Activated CD8-positive, alpha-beta T cell treated with anti-CD3 and anti-CD28 coated beads, Interleukin-2, amount 10 ng/mL, durations not matched to agents 7 days and 5 days (primary cell): ENCODE measurements at regions of chr6 and their contacts with region 1.

Region 1: DNA sequence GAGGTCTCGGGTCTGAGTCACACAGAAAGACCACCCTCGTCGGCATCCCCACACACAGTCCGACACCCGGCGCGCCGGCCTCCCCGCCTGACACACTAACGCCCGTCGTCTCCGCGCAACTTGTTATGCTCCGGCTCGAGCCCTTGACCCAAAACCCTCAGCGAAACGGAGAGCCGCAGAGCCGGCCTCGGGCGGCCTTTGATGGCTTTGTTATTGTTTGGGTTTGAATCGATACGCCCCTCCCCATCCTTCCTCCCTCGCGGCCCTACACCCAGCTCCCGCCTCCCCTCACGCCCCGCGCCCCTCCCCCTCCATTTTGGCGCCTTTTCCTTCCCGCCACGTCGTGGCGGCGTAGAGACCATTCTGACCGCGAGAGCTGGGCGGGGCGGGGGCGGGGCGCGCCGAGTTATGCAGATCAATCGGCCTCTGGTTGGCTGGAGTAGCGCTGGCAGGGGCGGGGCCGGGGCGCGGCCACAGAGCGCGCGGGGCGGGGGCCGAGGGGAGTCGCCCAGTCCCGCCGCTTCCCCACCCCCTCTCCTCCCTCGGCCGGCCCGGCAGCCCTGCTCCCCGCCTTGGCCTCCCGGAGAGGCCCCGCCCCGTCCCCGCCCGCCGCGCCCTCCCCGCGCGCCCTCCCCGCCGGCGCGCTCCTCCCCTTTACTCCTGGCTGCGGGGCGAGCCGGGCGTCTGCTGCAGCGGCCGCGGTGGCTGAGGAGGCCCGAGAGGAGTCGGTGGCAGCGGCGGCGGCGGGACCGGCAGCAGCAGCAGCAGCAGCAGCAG is at the start of gene PIM1:
- DNase-seq: peak; percentile 100
- ATAC-seq: peak; percentile 82
- H3K4me3 Mint-ChIP-seq: peak within 1 kb of the TSS; percentile 100
- H3K27ac Mint-ChIP-seq: peak within 1 kb of the TSS; percentile 99
- H3K4me1 Mint-ChIP-seq: peaks cover 31% of the 10 kb centered on the region
- H3K27me3 Mint-ChIP-seq: peaks cover 4% of the 10 kb centered on the region
- total RNA-seq, gene PIM1: 432 to 449 TPM

Region 2: GRCh38 chr6:37029249-37029971 is 140.3 kb before region 1 on chr6:
- CTCF ChIA-PET with region 1: interaction called, 584 read pairs
- POLR2A ChIA-PET with region 1: interaction called, 330 read pairs
- DNase-seq: peak; percentile 64
- ATAC-seq: peak; percentile 62
- H3K4me3 Mint-ChIP-seq: no peak overlapping the region
- H3K27ac Mint-ChIP-seq: peak overlapping the region; percentile 75
- H3K4me1 Mint-ChIP-seq: peaks cover 84% of the 10 kb centered on the region
- H3K27me3 Mint-ChIP-seq: no peaks in the 10 kb centered on the region

Region 3: GRCh38 chr6:37122861-37123260 is 46.8 kb before region 1 on chr6:
- CTCF ChIA-PET with region 1: no interaction called
- POLR2A ChIA-PET with region 1: no interaction called
- DNase-seq: no peak
- ATAC-seq: no peak
- H3K4me3 Mint-ChIP-seq: no peak overlapping the region
- H3K27ac Mint-ChIP-seq: no peak overlapping the region
- H3K4me1 Mint-ChIP-seq: peaks cover 4% of the 10 kb centered on the region
- H3K27me3 Mint-ChIP-seq: peaks cover 10% of the 10 kb centered on the region

Region 4: DNA sequence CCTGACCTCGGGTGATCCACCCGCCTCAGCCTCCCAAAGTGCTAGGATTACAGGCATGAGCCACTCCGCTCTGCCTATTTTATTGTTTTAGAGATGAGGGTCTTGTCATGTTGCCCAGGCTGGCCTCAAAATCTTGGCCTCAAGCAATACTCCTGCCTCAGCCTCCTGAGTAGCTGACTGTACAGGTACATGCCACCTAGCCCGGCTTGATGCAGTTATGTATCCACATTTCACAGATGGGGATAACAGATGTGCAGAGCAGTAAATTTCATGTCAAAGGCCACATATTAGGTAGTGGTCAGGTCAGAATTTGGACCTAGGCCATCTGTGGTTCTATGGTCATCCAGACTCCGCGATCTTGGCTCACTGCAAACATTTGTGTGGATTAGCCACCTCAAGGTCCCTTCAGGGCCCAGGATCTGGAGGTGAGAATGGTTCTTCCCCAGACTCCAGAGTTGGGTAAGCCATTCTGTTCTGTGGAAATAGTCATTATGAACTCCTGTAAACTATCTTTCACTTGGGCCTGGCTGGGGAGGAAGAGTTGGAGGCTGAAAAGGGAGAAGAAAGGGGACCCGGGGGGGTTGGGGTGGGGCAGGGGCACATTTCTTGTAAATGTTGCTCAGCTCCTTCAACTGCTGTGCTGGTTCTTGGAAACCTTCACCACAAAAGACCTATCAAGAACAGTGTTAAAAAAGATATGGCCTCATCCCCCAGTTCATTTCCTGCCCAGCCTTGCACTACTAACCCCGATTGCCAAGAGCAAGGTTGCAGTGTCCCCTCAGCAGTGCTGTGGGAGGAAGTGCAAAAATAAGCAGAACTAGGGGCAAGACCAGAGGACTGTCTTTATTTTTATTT is 13.3 kb after region 1 on chr6:
- CTCF ChIA-PET with region 1: interaction called, 45 read pairs
- POLR2A ChIA-PET with region 1: interaction called, 128 read pairs
- DNase-seq: peak; percentile 89
- ATAC-seq: peak; percentile 95
- H3K4me3 Mint-ChIP-seq: peak overlapping the region; percentile 36
- H3K27ac Mint-ChIP-seq: peak overlapping the region; percentile 96
- H3K4me1 Mint-ChIP-seq: peaks cover 73% of the 10 kb centered on the region
- H3K27me3 Mint-ChIP-seq: no peaks in the 10 kb centered on the region

Region 5: DNA sequence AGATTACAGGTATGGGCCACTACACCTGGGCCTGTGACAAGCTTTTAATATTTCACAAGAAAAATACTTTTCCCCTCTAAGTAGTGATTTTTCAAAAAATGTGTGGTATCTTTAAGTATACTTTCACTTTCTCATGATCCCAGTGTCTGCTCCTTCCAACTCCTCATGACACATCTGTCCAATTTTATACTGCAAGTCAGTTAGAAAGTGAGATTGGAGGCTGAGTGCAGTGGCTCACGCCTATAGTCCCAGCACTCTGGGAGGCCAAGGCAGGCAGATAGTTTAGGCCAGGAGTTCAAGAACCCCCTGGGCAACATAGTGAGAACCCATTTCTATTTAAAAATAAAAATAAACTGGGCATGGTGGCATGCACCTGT is 20.5 kb after region 1 on chr6:
- CTCF ChIA-PET with region 1: interaction called, 45 read pairs
- POLR2A ChIA-PET with region 1: interaction called, 128 read pairs
- DNase-seq: no peak
- ATAC-seq: peak; percentile 45
- H3K4me3 Mint-ChIP-seq: peak overlapping the region; percentile 12
- H3K27ac Mint-ChIP-seq: peak overlapping the region; percentile 85
- H3K4me1 Mint-ChIP-seq: peaks cover 76% of the 10 kb centered on the region
- H3K27me3 Mint-ChIP-seq: no peaks in the 10 kb centered on the region

Region 6: GRCh38 chr6:37200085-37200484 is 30.4 kb after region 1 on chr6:
- CTCF ChIA-PET with region 1: interaction called, 210 read pairs
- POLR2A ChIA-PET with region 1: interaction called, 351 read pairs
- DNase-seq: no peak
- ATAC-seq: no peak
- H3K4me3 Mint-ChIP-seq: no peak overlapping the region
- H3K27ac Mint-ChIP-seq: peak overlapping the region; percentile 3
- H3K4me1 Mint-ChIP-seq: peaks cover 46% of the 10 kb centered on the region
- H3K27me3 Mint-ChIP-seq: no peaks in the 10 kb centered on the region

Region 7: GRCh38 chr6:37657112-37657886 is 487.6 kb after region 1 on chr6:
- CTCF ChIA-PET with region 1: no interaction called
- POLR2A ChIA-PET with region 1: no interaction called
- DNase-seq: no peak
- ATAC-seq: no peak
- H3K4me3 Mint-ChIP-seq: no peak overlapping the region
- H3K27ac Mint-ChIP-seq: no peak overlapping the region
- H3K4me1 Mint-ChIP-seq: peaks cover 4% of the 10 kb centered on the region
- H3K27me3 Mint-ChIP-seq: peaks cover 13% of the 10 kb centered on the region